HCT116 (cell line): ENCODE measurements at regions of chr15 and their contacts with region 1.

Region 1: DNA sequence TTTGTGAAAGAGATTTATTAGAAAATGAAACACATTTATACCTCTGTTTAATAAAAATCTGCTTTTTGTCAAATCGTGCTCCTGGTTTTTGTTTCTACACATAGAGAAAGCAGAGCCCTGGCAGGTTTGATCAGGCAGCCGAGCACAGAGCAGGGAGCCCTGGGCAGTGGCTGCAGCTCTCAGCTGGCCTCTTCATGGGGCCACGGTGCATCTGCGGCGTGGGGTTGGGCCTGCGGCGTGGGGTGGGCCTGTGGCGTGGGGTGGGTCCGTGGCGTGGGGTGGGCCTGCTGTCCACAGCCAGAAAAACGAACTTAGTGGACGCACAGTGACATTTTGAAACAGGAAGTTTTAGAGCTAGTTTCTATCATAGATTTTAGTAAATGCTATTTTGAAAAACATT is 10.6 kb downstream of the GOLGA6L2 start:
- DNase-seq: no peak
- ATAC-seq: no peak
- H3K4me3 ChIP-seq: no peak overlapping the region
- H3K27ac ChIP-seq: no peak overlapping the region
- H3K4me1 ChIP-seq: no peaks in the 10 kb centered on the region
- H3K27me3 ChIP-seq: peaks cover 10% of the 10 kb centered on the region
- CTCF ChIP-seq: no peak
- POLR2A ChIP-seq: no peak
- RAD21 ChIP-seq: no peak

Region 2: GRCh38 chr15:23447107-23447500 is 10.7 kb after region 1 on chr15 and contains the start of gene GOLGA6L2:
- CTCF ChIA-PET with region 1: no interaction called
- POLR2A ChIA-PET with region 1: no interaction called
- RAD21 ChIA-PET with region 1: no interaction called
- intact Hi-C with region 1: no loop called
- DNase-seq: peak; percentile 77
- ATAC-seq: peak; percentile 81
- H3K4me3 ChIP-seq: no peak within 1 kb of the TSS
- H3K27ac ChIP-seq: no peak within 1 kb of the TSS
- H3K4me1 ChIP-seq: no peaks in the 10 kb centered on the region; a peak in 1 of 4 replicates
- H3K27me3 ChIP-seq: peaks cover 10% of the 10 kb centered on the region; the same call in 1 of the 2 replicates
- CTCF ChIP-seq: no peak
- POLR2A ChIP-seq: no peak
- RAD21 ChIP-seq: no peak
- total RNA-seq, gene GOLGA6L2: not detected

Region 3: GRCh38 chr15:23484870-23485269 is 48.4 kb after region 1 on chr15:
- CTCF ChIA-PET with region 1: no interaction called
- POLR2A ChIA-PET with region 1: no interaction called
- RAD21 ChIA-PET with region 1: no interaction called
- intact Hi-C with region 1: loop called (anchors 5 kb)
- DNase-seq: no peak
- ATAC-seq: no peak
- H3K4me3 ChIP-seq: no peak overlapping the region
- H3K27ac ChIP-seq: no peak overlapping the region
- H3K4me1 ChIP-seq: no peaks in the 10 kb centered on the region
- H3K27me3 ChIP-seq: peaks cover 46% of the 10 kb centered on the region
- CTCF ChIP-seq: no peak
- POLR2A ChIP-seq: no peak
- RAD21 ChIP-seq: no peak